ENCODE measurements at regions of chr9 and their contacts with region 1.

Region 1: DNA sequence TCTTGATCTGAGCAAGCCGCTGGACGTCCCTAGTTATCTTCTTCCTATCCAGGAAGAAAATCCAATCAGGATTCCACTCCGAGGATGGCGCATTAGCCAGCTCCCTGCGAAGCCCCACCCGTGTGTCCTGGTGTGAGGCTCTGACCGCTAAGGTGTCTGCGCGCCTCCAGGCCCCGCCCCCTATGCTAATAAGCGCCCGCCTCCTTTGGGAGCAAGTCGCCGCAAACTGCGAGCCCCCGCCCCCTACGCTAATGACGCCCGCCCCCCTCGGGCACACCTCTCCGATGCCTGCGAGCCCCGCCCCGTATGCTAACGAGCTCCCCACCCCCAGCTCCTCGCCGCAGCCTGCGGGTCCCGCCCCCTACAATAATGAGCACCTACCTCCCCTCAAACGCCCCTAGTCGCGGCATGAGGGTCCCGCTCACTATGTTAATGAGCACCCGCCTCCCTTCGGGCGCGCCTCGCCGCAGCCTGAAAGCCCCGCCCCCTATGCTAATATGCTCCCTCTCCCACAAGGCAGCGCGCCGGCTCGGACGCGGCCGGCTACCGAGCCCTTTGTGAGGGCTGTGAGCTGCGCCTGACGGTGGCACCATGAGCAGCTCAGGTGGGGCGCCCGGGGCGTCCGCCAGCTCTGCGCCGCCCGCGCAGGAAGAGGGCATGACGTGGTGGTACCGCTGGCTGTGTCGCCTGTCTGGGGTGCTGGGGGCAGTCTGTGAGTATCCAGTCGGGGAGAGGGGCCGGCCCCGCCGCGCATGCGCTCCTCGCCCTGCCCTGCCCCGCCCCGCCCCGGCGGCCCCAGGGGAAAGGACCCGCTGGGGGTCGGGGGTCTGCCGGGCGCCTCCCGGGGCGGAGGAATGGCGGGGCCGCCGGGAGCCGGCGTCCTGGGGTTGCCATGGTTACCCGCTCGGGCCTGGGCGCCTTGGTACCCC is at the start of gene CACFD1:
- DNase-seq: peak; percentile 93
- H3K4me3 Mint-ChIP-seq: peak within 1 kb of the TSS; percentile 98
- H3K27ac Mint-ChIP-seq: peak within 1 kb of the TSS; percentile 86
- H3K4me1 Mint-ChIP-seq: no peaks in the 10 kb centered on the region
- H3K27me3 Mint-ChIP-seq: no peaks in the 10 kb centered on the region
- CTCF ChIP-seq: no peak
- total RNA-seq, gene CACFD1: 15.1 and 19.9 TPM in 2 replicates

Region 2: DNA sequence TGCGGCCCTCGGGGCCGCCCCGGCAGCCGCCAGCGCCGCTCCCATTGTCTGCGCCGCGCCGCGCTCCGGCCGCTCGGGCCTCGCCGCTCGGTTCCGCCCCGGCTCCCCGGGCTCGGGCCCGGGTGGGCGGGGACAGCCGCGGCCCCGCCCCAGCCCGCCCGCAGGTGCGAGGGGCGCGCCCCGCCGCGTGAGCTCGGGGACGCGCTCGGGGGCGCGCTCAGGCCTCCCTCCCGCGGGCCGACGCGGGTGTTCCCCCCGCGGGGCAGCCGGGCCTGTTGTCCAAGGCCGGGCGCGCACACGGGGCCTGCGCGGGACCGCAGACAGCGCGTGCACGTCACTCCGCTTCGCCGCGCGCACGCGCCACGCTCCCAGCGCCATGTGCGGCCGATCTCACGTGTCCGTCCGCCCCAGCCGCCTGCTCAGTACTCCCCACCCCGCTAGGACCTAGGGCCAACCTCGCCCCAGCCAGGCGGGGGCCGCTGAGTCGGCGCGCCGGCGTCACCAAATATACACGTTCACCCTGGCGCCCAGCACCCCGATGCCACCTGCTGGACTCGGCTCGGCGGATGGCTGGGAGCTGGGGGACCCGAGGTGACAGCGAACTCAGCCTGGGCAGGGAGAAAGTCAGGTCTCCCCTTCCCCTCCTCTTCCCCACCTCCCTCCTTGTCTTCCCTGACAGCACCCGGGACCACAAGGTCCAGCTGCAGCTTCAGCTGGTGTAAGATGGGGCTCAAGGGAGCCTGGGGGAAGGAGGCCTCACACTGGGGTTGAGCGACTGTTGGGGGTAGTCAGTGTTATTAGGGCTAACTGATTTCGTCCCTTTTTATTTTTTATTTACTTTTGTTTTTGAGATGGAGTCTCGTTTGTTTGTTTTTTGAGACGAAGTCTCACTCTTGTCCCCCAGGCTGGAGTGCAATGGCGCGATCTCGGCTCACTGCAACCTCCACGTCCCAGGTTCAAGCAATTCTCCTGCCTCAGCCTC is 310.3 kb before region 1 on chr9:
- CTCF ChIA-PET with region 1: no interaction called
- intact Hi-C with region 1: no loop called
- DNase-seq: peak; percentile 87
- H3K4me3 Mint-ChIP-seq: peak overlapping the region; percentile 84
- H3K27ac Mint-ChIP-seq: no peak overlapping the region
- H3K4me1 Mint-ChIP-seq: no peaks in the 10 kb centered on the region
- H3K27me3 Mint-ChIP-seq: peaks cover 7% of the 10 kb centered on the region
- CTCF ChIP-seq: no peak

Region 3: GRCh38 chr9:133374612-133375118 is 85.1 kb before region 1 on chr9:
- CTCF ChIA-PET with region 1: no interaction called
- intact Hi-C with region 1: no loop called
- DNase-seq: no peak
- H3K4me3 Mint-ChIP-seq: peak overlapping the region; percentile 89
- H3K27ac Mint-ChIP-seq: peak overlapping the region; percentile 88
- H3K4me1 Mint-ChIP-seq: peaks cover 18% of the 10 kb centered on the region
- H3K27me3 Mint-ChIP-seq: no peaks in the 10 kb centered on the region
- CTCF ChIP-seq: no peak

Region 4: DNA sequence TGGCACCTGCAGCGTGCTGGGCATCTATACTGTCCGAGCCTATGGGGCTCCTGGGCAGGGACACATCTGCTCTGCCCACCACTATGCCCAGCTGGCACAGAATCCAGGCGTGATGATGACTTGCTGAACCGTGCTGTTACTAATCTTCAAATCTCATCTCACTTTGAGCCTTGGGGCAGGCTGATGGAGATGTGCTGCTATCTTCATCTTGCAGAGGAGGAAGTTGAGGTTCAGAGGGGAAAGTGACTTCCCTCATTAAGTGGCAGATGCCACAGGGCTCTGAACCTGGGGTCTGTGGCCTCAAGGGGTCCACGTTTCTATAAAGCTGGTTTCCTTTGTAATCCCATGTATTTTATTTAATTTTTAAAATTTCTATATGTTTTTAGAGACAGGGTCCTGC is 14.5 kb after region 1 on chr9:
- CTCF ChIA-PET with region 1: no interaction called
- intact Hi-C with region 1: no loop called
- DNase-seq: no peak
- H3K4me3 Mint-ChIP-seq: no peak overlapping the region
- H3K27ac Mint-ChIP-seq: no peak overlapping the region
- H3K4me1 Mint-ChIP-seq: no peaks in the 10 kb centered on the region
- H3K27me3 Mint-ChIP-seq: no peaks in the 10 kb centered on the region
- CTCF ChIP-seq: no peak

Region 5: DNA sequence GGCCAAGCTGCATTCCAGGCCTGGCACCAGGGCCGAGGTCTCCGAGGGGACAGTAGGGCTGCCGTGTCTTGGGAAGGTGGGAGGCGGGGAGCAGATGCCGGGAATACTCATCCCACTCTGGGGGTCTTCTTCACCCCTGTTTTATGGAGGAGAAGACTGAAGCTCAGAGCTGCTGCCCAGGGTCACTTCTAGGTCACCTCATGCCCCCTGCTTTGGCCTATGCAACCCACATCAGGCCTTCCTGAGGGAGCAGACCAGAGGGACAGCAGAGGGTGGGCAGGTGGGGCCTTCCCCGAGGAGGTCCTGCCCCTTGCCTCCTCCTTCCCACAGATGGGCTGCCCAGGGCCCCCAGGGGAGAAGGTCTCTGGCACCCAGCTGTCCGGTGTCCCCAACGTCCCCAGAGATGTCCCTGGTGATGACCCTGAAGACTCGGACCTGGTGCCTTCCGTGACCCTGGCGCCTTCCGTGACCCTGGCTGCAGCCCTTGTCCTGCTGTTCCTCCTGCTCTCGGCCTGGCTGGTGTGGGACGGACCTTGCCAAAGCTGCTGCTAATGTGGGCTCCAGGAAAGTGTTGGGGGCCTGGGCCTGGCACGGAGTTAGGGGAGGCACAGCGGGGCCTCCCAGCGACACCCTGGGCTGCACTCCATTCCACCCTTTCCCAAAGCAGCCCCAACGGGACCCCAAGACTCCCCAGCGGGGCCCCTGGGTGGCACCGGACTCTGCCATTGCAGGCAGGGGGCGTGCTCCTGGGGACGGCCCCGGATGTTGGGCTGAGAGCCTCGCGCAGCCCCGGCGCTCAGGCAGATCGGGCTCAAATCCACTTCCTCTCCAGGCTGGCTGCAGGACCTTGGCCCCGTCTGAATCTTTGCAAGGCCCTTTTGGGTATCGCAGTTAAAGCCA is 25.9 kb after region 1 on chr9:
- CTCF ChIA-PET with region 1: interaction called, 12 read pairs
- intact Hi-C with region 1: no loop called
- DNase-seq: no peak
- H3K4me3 Mint-ChIP-seq: no peak overlapping the region
- H3K27ac Mint-ChIP-seq: no peak overlapping the region
- H3K4me1 Mint-ChIP-seq: no peaks in the 10 kb centered on the region
- H3K27me3 Mint-ChIP-seq: peaks cover 18% of the 10 kb centered on the region
- CTCF ChIP-seq: no peak

Measured in Calu3 (cell line).